Activated T-helper 1 cell treated with anti-CD3 and anti-CD28 coated beads, Interleukin-12 subunit alpha, Interleukin-12 subunit beta, Interleukin-2, Interleukin-4 antibody, amounts not matched to agents 30 ng/mL and 10 ng/mL and 1 ng/mL, durations not matched to agents 14 hours and 24 hours and 36 hours (primary cell): ENCODE measurements at regions of chr1 and their contacts with region 1.

Region 1: GRCh38 chr1:150420560-150421265 is 56.8 kb downstream of the RPRD2 start:
- DNase-seq: no peak
- H3K4me3 Mint-ChIP-seq: no peak overlapping the region
- H3K27ac Mint-ChIP-seq: no peak overlapping the region
- H3K4me1 Mint-ChIP-seq: peaks cover 17% of the 10 kb centered on the region
- H3K27me3 Mint-ChIP-seq: no peaks in the 10 kb centered on the region

Region 2: DNA sequence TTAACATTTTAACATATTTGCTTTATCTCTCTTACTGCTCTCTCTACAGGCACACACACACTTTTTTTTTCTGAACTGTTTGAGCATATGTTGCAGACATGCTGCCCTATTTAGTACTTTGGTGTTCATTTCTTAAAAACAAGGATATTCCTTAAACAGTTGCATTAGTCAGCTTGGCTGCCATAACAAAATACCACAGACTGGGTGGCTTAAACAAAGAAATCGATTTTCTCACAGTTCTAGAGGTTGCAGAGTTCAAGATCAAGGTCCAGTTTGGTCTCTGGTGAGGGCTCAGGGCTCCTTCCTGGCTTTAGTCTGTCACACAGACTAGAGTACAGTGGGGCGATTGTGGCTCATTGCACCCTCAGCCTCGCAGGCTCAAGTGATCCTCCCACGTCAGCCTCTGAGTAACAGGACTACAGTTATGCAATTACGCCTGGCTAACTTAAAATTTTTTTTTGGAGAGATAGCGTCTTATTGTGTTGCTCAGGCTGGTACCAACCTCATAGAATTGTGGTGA is 10.1 kb before region 1 on chr1:
- intact Hi-C with region 1: loop called (anchors 1 kb)
- DNase-seq: no peak
- H3K4me3 Mint-ChIP-seq: no peak overlapping the region
- H3K27ac Mint-ChIP-seq: no peak overlapping the region
- H3K4me1 Mint-ChIP-seq: peaks cover 25% of the 10 kb centered on the region
- H3K27me3 Mint-ChIP-seq: no peaks in the 10 kb centered on the region